ENCODE measurements at regions of chr2 and their contacts with region 1.

Region 1: GRCh38 chr2:217886720-217887309 is 116.0 kb downstream of the TNS1 start:
- DNase-seq: peak; percentile 81
- H3K4me3 ChIP-seq: no peak overlapping the region
- H3K27ac ChIP-seq: peak overlapping the region in 2 of 4 donors; percentile 7 to 58
- H3K4me1 ChIP-seq: no peaks in the 10 kb centered on the region
- H3K27me3 ChIP-seq: no peaks in the 10 kb centered on the region
- CTCF ChIP-seq: peak; percentile 74 to 83 (median 78)
- EP300 ChIP-seq: no peak
- POLR2A ChIP-seq: no peak

Region 2: DNA sequence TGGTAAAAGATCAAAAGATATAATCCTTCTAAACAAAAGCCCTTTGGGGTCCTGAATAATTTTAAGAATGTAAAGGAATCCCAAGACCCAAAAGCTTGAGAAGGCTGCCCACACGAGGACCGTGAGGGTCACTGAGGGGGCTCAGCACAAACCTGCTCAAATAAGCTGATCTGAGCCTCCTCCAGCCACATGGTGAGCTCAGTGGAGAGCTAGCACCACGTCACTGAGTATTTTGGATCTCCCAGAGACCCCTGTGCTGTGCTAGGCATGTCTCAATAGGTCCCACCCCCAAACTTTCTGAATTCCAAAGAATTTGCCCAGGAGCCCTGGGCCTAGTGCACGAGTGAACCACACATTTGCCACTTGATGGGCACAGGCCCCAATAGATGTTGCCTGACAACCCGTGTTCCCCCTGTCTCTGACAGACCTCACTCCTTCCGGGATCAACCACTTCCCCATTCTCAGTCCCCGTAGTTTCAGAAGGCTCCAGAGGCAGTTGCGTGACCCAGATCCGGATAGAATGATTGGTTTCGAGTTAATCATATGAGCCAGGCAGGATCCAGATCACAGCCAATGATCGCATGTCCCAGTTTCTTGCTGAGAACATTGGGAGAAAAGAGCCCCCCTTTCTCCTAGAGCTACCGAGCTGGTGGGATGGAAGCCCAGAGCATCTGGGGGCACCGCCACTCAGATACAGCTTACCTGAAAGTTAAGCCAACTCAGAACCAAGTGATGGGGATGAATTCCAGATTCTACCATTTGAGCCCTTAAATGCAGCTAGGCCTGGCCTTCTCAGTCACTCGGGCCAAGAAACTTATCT is 87.9 kb before region 1 on chr2:
- in situ Hi-C with region 1: loop called in 1 of 4 experiments (anchors 10 kb)
- intact Hi-C with region 1: no loop called
- DNase-seq: peak; percentile 32
- H3K4me3 ChIP-seq: no peak overlapping the region
- H3K27ac ChIP-seq: peak overlapping the region; percentile 13 to 62 (median 50)
- H3K4me1 ChIP-seq: peaks cover 0 to 9% (median 3%) of the 10 kb centered on the region in 4 donors
- H3K27me3 ChIP-seq: no peaks in the 10 kb centered on the region
- CTCF ChIP-seq: no peak
- EP300 ChIP-seq: no peak
- POLR2A ChIP-seq: no peak

Region 3: DNA sequence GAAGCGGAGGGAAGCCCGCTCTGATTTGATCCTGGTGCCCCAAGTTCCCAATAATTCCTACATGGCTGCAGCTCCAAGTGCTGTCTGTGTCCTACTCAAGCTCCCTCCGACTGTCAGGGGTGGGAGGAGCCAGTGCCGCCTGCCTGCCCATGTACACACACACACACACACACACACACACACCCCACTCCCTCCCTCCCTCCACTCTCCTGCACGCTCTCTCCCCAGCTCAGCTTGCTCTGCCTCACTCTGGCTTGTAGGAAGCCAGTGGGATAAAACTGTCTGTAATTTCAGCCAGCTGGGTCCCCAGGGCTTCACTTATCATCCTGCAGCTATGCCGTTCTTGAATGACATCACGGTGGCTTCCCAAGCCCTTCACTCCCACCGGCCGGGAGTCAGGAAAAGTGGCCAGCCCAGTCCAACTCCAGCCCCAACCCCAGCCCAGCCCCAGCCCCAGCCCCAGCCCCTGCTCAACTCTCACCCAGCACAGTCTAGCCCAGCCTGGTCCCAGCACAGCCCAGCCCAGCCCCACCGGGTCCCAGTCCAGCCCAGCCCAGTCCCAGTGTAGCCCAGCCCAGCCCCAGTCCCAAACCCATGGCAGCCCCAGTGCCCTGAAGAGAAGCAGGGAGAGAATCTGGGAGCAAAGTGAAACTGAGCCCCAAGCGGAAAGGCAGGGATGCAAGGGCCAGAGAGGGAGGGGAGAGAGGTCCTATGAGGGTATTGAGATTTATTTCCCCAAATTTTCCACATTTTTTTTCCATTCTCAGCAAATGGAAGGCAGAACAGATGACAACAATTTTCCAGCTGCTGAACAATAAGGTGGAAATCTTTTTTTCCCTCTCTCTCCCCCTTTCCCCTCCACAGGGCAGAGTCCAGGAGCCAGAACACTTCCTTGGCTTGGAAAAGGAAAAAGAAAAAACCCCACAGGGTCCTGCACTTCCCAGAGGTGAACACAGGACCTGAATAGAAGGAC is 28.0 kb before region 1 on chr2:
- in situ Hi-C with region 1: no loop called
- intact Hi-C with region 1: loop called (anchors 2 kb)
- DNase-seq: peak; percentile 46
- H3K4me3 ChIP-seq: no peak overlapping the region
- H3K27ac ChIP-seq: peak overlapping the region; percentile 70 to 90 (median 74)
- H3K4me1 ChIP-seq: peaks cover 10 to 48% (median 33%) of the 10 kb centered on the region in 4 donors
- H3K27me3 ChIP-seq: no peaks in the 10 kb centered on the region
- CTCF ChIP-seq: no peak
- EP300 ChIP-seq: no peak
- POLR2A ChIP-seq: no peak

Region 4: DNA sequence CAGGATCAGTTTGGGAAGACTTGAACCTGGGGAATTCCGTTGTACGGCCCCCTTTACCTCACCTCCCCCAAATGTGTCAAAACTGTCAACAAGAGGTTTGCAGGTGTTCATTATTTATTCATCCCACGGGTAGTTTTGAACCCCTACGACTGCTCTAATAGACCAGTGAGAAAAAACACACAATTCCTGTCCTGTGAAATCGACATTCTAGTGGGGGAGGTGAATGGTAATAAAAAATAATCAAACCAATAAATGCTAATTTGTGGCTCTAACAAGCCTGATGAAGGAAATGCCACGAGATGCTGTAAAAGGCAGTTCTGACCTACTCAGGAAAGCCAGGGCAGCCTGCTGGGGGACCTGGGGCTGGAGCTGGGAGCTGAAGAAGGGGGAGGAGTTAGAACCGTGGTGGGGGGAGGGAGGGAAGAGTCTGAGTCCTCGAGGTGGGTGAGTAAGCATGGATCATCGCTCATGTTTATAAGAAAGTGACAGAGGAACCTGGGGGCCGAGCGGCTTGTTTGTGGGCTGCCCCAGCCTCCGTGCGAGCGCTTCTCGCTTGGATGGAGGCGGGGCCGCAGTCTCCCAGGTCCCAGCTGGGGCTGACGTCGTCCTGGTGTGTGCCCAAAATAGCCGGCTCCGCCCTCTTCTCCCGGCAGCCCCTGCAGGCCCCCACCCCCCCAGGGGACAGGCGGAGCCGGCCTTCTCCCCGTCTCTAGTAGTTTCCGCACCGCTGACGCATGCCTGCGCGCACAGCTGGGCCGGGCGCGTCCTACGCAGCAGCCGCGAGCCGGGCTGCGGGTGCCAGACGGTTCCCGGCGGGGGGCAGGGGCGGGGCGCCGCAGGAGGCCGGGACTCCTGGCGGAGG is 1392.1 kb after region 1 on chr2 and contains the start of gene DNAJB2:
- in situ Hi-C with region 1: no loop called
- intact Hi-C with region 1: no loop called
- DNase-seq: peak; percentile 99
- H3K4me3 ChIP-seq: peak within 1 kb of the TSS; percentile 53 to 91 (median 68)
- H3K27ac ChIP-seq: peak within 1 kb of the TSS; percentile 94 to 98 (median 98)
- H3K4me1 ChIP-seq: peaks cover 16 to 29% (median 23%) of the 10 kb centered on the region in 4 donors
- H3K27me3 ChIP-seq: no peaks in the 10 kb centered on the region
- CTCF ChIP-seq: no peak
- EP300 ChIP-seq: peak; percentile 77
- POLR2A ChIP-seq: peak; percentile 89
- total RNA-seq, gene DNAJB2: 22.7 to 95.0 (median 54.3) TPM